A673 (cell line): ENCODE measurements at regions of chr2 and their contacts with region 1.

Region 1: DNA sequence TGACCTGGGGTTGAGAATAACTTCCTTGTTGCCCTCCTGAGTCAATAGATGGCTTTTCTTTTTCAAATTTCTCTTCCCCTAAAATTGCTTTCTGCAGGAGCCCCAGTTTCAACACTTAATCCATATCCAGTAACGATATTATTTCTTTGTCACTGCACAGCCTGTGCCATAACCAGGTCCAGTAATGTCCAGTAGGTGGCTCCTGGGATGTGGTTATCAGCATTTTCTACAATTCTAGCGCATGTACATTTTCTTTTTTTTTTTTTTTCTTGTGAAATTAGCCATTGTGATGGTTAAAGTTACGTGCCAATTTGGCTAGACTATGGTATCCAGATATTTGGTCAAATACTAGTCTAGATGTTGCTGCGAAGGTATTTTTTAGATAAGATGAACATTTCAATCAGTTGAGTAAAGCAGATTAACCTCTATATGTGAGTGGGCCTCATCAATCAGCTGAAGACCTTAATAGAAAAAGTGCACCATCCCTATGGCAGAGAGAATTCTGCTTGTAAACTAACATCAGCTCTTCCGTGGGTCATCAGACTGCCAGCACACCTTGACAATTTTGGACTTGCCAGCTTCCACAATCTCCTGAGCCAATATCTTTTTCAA is 72.9 kb upstream of the SCG2 start:
- DNase-seq: peak; percentile 58
- H3K4me3 ChIP-seq: no peak overlapping the region
- H3K27ac ChIP-seq: peak overlapping the region; percentile 38
- H3K4me1 ChIP-seq: peaks cover 5% of the 10 kb centered on the region
- H3K27me3 ChIP-seq: no peaks in the 10 kb centered on the region
- CTCF ChIP-seq: peak; percentile 67

Region 2: DNA sequence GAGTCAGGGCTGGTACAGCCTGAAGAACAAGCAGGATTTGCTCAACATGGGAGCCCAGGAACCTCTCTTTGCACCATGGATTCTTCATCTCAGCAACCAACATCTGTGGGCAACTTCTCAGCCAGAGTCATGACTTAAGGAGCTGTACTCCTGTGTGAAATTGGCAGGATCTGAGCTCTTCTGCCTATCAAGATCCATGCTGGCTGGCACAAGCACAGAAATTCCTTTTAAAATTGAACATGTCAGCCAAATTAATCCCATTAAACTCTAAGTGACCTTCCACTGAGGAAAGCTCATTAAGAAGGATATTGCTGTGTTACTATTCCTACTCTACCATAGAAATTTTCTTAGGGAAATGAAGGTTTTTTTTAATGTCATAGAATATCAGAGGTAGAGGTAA is 37.5 kb after region 1 on chr2:
- CTCF ChIA-PET with region 1: no interaction called
- POLR2A ChIA-PET with region 1: no interaction called
- intact Hi-C with region 1: no loop called
- DNase-seq: no peak
- H3K4me3 ChIP-seq: no peak overlapping the region
- H3K27ac ChIP-seq: no peak overlapping the region
- H3K4me1 ChIP-seq: peaks cover 40% of the 10 kb centered on the region
- H3K27me3 ChIP-seq: no peaks in the 10 kb centered on the region
- CTCF ChIP-seq: no peak

Region 3: GRCh38 chr2:223779877-223780276 is 104.8 kb after region 1 on chr2:
- CTCF ChIA-PET with region 1: interaction called, 11 read pairs
- POLR2A ChIA-PET with region 1: no interaction called
- intact Hi-C with region 1: no loop called
- DNase-seq: peak; percentile 85
- H3K4me3 ChIP-seq: no peak overlapping the region
- H3K27ac ChIP-seq: no peak overlapping the region
- H3K4me1 ChIP-seq: peaks cover 4% of the 10 kb centered on the region
- H3K27me3 ChIP-seq: no peaks in the 10 kb centered on the region
- CTCF ChIP-seq: peak; percentile 48